B cell (primary cell): ENCODE measurements at regions of chr2 and their contacts with region 1.

Region 1: GRCh38 chr2:113910110-113910717 is 20.3 kb downstream of the ACTR3 start:
- DNase-seq: no peak
- ATAC-seq: peak; percentile 47
- H3K4me3 ChIP-seq: no peak overlapping the region
- H3K4me3 Mint-ChIP-seq: peak overlapping the region; percentile 40
- H3K27ac ChIP-seq: peak overlapping the region; percentile 6 to 66
- H3K27ac Mint-ChIP-seq: peak overlapping the region; percentile 79
- H3K4me1 ChIP-seq: peaks cover 21 to 51% of the 10 kb centered on the region in 2 donors
- H3K4me1 Mint-ChIP-seq: peaks cover 63% of the 10 kb centered on the region
- H3K27me3 ChIP-seq: no peaks in the 10 kb centered on the region
- H3K27me3 Mint-ChIP-seq: no peaks in the 10 kb centered on the region
- CTCF ChIP-seq: no peak

Region 2: DNA sequence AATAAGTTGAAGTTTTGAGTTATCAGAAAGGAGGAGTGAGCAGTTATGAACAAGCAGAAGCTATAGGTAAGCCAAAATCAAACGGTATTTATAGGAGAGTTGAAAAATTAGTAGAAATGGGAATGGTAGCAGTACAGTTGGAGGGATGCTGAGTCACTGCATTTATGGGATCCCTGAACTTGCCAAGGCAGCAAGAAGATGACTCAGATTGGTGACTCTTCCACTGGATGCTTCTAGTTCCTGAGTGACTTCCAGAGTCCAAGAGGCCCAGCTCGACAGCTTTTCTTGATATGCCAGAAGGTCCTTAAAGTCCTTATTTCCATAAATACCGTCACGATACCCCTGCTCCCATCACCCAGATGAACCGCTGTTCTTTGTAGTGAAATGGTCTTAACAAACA is 51.5 kb before region 1 on chr2:
- CTCF ChIA-PET with region 1: no interaction called
- POLR2A ChIA-PET with region 1: interaction called, 13 read pairs
- intact Hi-C with region 1: no loop called
- DNase-seq: no peak
- ATAC-seq: no peak
- H3K4me3 ChIP-seq: peak overlapping the region in 1 of 5 experiments; percentile 44
- H3K4me3 Mint-ChIP-seq: peak overlapping the region; percentile 35
- H3K27ac ChIP-seq: peak overlapping the region; percentile 89 to 96
- H3K27ac Mint-ChIP-seq: peak overlapping the region; percentile 70
- H3K4me1 ChIP-seq: peaks cover 83 to 88% of the 10 kb centered on the region in 2 donors
- H3K4me1 Mint-ChIP-seq: peaks cover 84% of the 10 kb centered on the region
- H3K27me3 ChIP-seq: no peaks in the 10 kb centered on the region
- H3K27me3 Mint-ChIP-seq: no peaks in the 10 kb centered on the region
- CTCF ChIP-seq: no peak

Region 3: DNA sequence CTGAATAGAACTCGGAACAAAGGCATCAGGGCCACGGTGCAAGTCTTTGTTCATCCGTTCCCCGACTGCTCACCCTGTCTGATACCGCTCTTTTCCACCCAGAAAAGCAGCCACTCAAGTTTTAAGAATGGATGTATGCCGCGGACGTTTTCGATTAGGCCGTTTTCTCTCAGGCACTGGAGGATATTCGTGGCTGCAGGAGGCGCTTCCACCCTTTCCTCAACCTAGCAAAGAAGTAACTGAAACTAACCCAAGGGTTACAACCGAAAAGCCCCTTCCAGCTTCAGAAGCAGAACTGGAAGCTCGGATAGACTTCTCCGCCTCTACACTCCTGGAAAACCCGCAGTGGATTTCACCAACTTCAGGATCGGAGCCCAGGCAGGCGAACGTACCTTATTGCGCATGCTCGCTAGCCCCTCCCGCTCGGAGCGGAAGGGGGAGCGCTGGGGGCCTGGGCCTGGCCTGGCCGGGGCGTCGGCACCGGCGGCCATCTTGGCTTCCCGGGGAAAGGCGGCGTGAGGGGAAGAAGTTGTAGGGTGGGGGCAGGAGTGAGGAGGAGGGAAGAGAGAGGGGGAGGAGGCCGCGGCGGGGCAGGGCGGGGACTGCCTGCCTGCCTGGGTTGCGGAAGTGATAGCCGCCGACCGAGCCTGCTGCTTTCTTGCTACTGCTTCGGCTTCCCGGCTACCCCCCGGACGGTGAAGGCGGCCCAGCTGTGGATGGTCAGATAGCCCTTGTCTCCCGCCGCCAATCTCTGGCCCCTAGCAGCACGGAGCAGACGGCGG is 20.6 kb before region 1 on chr2 and contains the start of gene ACTR3:
- CTCF ChIA-PET with region 1: interaction called, 10 read pairs
- POLR2A ChIA-PET with region 1: no interaction called
- intact Hi-C with region 1: no loop called
- DNase-seq: peak; percentile 100
- ATAC-seq: peak; percentile 82
- H3K4me3 ChIP-seq: peak within 1 kb of the TSS; percentile 79 to 96 (median 93)
- H3K4me3 Mint-ChIP-seq: peak within 1 kb of the TSS; percentile 99
- H3K27ac ChIP-seq: peak within 1 kb of the TSS; percentile 94 to 98
- H3K27ac Mint-ChIP-seq: peak within 1 kb of the TSS; percentile 98
- H3K4me1 ChIP-seq: peaks cover 63 to 66% of the 10 kb centered on the region in 2 donors
- H3K4me1 Mint-ChIP-seq: peaks cover 79% of the 10 kb centered on the region
- H3K27me3 ChIP-seq: no peaks in the 10 kb centered on the region
- H3K27me3 Mint-ChIP-seq: no peaks in the 10 kb centered on the region
- CTCF ChIP-seq: peak; percentile 16
- total RNA-seq, gene ACTR3: 240 and 249 TPM in 2 replicates

Region 4: GRCh38 chr2:113896791-113897190 is 13.4 kb before region 1 on chr2:
- CTCF ChIA-PET with region 1: interaction called, 10 read pairs
- POLR2A ChIA-PET with region 1: interaction called, 10 read pairs
- intact Hi-C with region 1: loop called (anchors 1 kb)
- DNase-seq: no peak
- ATAC-seq: no peak
- H3K4me3 ChIP-seq: peak overlapping the region in 1 of 5 experiments; percentile 4
- H3K4me3 Mint-ChIP-seq: peak overlapping the region; percentile 78
- H3K27ac ChIP-seq: peak overlapping the region in 1 of 2 donors; percentile 69
- H3K27ac Mint-ChIP-seq: no peak overlapping the region
- H3K4me1 ChIP-seq: peaks cover 72 to 98% of the 10 kb centered on the region in 2 donors
- H3K4me1 Mint-ChIP-seq: peaks cover 93% of the 10 kb centered on the region
- H3K27me3 ChIP-seq: no peaks in the 10 kb centered on the region
- H3K27me3 Mint-ChIP-seq: no peaks in the 10 kb centered on the region
- CTCF ChIP-seq: no peak

Region 5: DNA sequence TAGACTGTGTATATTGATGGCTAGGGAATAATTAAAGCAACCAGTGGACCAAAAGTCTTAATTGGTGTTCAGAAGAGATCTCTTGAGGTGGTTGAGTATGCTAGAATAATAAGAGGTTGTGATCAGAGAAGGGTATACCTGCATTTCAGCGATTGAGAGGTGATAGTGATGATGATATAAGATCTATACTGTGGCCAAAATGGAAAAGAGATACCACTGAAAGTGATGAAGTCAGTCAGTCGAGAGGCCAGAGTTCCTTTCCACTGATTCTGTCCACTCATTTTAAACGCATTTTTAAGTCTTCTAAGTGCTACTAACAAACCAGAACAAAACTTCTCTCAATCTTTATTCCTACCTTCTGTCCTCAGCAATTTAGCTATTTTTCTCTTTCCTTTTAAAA is 12.6 kb after region 1 on chr2:
- CTCF ChIA-PET with region 1: interaction called, 3 read pairs
- POLR2A ChIA-PET with region 1: no interaction called
- intact Hi-C with region 1: loop called (anchors 1 kb)
- DNase-seq: no peak
- ATAC-seq: no peak
- H3K4me3 ChIP-seq: no peak overlapping the region
- H3K4me3 Mint-ChIP-seq: no peak overlapping the region
- H3K27ac ChIP-seq: peak overlapping the region; percentile 19 to 78
- H3K27ac Mint-ChIP-seq: no peak overlapping the region
- H3K4me1 ChIP-seq: peaks cover 27 to 39% of the 10 kb centered on the region in 2 donors
- H3K4me1 Mint-ChIP-seq: peaks cover 35% of the 10 kb centered on the region
- H3K27me3 ChIP-seq: no peaks in the 10 kb centered on the region
- H3K27me3 Mint-ChIP-seq: no peaks in the 10 kb centered on the region
- CTCF ChIP-seq: no peak

Region 6: DNA sequence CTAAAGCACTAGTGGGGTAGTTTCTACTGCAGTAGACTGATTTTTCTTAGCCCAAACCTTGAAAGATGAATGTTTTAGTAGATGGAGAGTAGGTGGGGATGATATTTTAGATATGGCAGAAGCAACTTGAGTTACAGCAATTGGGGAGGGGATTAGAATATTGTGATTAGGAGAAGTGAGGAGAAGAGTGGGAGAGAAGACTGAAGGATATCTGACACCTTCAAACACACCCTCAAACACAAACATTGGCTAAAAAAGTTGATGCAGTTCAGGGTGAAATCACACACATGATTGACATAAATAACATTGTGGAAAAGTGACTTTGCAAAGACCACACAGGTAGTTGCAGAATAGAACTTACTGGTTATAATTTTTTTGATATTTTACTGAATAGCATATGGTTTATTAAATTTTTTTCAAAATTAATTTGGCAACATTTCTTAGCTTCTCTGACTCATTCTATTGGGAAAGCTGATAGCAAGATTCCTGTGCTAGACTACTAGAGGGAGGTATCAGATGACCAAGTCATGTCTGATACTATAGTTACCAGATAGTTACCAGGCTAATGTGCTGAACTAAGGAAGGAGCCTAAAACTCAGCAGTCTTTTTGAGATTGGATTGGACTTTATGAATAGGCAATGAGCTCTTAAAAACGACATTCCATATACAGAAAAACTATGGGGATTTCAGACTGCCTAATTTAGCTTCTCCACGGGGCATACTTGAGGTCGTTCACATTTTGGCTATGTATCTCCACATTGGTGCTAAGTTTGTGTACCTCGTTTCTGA is 52.7 kb after region 1 on chr2:
- CTCF ChIA-PET with region 1: interaction called, 10 read pairs
- POLR2A ChIA-PET with region 1: no interaction called
- intact Hi-C with region 1: no loop called
- DNase-seq: no peak
- ATAC-seq: no peak
- H3K4me3 ChIP-seq: no peak overlapping the region
- H3K4me3 Mint-ChIP-seq: no peak overlapping the region
- H3K27ac ChIP-seq: peak overlapping the region in 1 of 2 donors; percentile 27
- H3K27ac Mint-ChIP-seq: no peak overlapping the region
- H3K4me1 ChIP-seq: peaks cover 0 to 9% of the 10 kb centered on the region in 2 donors
- H3K4me1 Mint-ChIP-seq: peaks cover 19% of the 10 kb centered on the region
- H3K27me3 ChIP-seq: no peaks in the 10 kb centered on the region
- H3K27me3 Mint-ChIP-seq: no peaks in the 10 kb centered on the region
- CTCF ChIP-seq: no peak